GM10248 (cell line): ENCODE measurements at regions of chr16 and their contacts with region 1.

Region 1: GRCh38 chr16:58548378-58548777 is 33.1 kb downstream of the SETD6 start:
- DNase-seq: no peak
- CTCF ChIP-seq: no peak

Region 2: DNA sequence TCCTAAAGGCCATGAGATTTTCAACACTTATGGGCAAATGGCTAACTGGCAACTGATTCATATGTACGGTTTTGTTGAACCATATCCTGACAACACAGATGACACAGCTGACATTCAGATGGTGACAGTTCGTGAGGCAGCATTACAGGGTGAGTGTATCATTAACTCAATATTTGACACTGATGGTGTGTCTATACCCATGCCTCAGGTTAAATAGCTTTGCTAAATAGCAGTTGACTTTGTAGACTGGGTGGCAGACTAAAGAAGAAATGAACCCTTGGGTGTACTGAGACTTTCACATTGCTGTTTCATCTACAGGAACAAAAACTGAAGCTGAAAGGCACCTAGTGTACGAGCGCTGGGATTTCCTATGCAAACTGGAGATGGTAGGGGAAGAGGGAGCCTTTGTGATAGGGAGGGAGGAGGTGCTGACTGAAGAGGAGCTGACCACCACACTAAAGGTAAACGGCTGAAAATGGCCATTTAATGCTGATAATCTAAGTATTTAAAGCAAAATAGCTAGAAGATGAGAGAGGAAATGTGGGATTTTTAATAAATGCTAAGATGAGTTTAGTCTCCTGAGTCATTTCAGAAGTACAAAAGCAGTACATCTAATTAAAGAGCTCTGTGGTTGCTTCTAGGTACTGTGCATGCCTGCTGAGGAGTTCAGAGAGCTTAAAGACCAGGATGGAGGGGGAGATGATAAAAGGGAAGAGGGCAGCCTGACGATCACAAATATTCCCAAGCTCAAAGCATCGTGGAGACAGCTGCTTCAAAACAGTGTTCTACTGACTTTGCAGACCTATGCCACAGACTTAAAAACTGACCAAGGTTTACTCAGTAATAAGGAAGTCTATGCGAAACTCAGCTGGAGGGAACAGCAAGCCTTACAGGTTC is 30.0 kb before region 1 on chr16:
- CTCF ChIA-PET with region 1: interaction called, 13 read pairs
- POLR2A ChIA-PET with region 1: interaction called, 3 read pairs
- DNase-seq: no peak
- CTCF ChIP-seq: no peak